ENCODE measurements at regions of chr7 and their contacts with region 1.

Region 1: GRCh38 chr7:108525985-108526767 is at the start of gene PNPLA8:
- DNase-seq: peak; percentile 100
- ATAC-seq: peak; percentile 94
- H3K4me3 ChIP-seq: peak within 1 kb of the TSS; percentile 94
- H3K4me3 Mint-ChIP-seq: peak within 1 kb of the TSS; percentile 84 to 98 (median 97)
- H3K27ac ChIP-seq: peak within 1 kb of the TSS; percentile 89
- H3K27ac Mint-ChIP-seq: peak within 1 kb of the TSS; percentile 97 to 100 (median 99)
- H3K4me1 ChIP-seq: peaks cover 18% of the 10 kb centered on the region in 2 donors
- H3K4me1 Mint-ChIP-seq: peaks cover 18 to 46% (median 33%) of the 10 kb centered on the region in 7 donors
- H3K27me3 ChIP-seq: no peaks in the 10 kb centered on the region
- H3K27me3 Mint-ChIP-seq: peaks cover 0 to 4% (median 0%) of the 10 kb centered on the region in 5 donors
- total RNA-seq, gene PNPLA8: 18.5 to 89.9 (median 29.8) TPM

Region 2: DNA sequence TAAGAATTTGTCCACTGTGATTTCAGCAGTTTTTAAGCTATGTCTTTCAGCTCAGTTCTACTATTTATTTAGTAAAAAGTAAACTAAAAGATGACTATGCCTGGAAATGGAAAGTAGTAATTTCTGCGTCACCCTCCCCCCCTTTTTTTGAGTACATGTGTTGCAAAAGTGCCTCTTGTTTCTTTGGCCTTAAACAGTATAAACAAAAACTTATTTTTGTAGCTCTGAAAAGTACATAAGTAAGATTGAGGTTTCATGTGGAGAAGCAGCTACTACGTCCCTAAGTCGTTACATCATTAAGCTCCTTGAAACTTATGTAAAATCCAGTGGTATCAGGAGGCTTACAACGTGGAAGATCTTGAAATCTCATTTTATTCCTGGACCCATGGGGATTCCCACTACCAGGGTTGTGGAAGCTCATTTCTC is 1403.7 kb before region 1 on chr7:
- CTCF ChIA-PET with region 1: no interaction called
- POLR2A ChIA-PET with region 1: no interaction called
- intact Hi-C with region 1: loop called in 1 of 2 experiments (anchors 5 kb)
- DNase-seq: no peak
- ATAC-seq: no peak
- H3K4me3 ChIP-seq: no peak overlapping the region
- H3K4me3 Mint-ChIP-seq: no peak overlapping the region
- H3K27ac ChIP-seq: no peak overlapping the region
- H3K27ac Mint-ChIP-seq: no peak overlapping the region
- H3K4me1 ChIP-seq: peaks cover 4 to 16% of the 10 kb centered on the region in 2 donors
- H3K4me1 Mint-ChIP-seq: peaks cover 12 to 25% (median 20%) of the 10 kb centered on the region in 7 donors
- H3K27me3 ChIP-seq: no peaks in the 10 kb centered on the region
- H3K27me3 Mint-ChIP-seq: peaks cover 0 to 12% (median 0%) of the 10 kb centered on the region in 5 donors

Region 3: DNA sequence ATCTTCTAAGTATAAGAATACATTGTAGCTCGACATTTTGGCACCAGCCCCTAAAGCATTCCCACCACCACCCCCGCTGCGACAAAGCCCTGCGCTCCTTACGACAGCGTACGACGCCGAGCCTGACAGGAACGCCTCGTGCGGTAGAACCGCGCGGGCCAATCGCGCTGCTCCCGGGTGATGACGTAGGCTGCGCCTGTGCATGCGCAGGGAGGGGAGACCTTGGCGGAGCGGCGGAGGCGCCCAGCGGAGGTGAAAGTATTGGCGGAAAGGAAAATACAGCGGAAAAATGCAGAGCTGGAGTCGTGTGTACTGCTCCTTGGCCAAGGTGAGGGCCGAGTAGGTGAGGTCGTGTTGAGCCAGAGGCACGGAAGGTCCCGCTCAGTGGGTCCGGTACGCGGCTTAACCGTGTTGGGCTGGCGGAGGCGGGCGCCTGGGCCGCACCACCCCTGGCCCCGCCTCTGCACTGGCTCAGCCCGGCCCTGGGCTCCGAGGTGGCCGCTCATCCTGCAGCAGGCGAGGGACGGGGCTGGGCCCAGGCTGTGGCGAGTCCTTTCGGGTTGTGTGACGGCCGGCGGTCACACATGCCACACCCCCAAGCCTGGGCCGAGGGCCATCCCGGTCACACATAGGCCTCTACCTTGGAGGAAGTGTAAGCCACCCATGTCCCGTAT is 635.1 kb before region 1 on chr7 and contains the start of gene DLD:
- CTCF ChIA-PET with region 1: no interaction called
- POLR2A ChIA-PET with region 1: no interaction called
- intact Hi-C with region 1: loop called (anchors 1 to 10 kb)
- DNase-seq: peak; percentile 89 to 94 (median 93)
- ATAC-seq: peak; percentile 98
- H3K4me3 ChIP-seq: peak within 1 kb of the TSS; percentile 93
- H3K4me3 Mint-ChIP-seq: peak within 1 kb of the TSS; percentile 89 to 100 (median 97)
- H3K27ac ChIP-seq: peak within 1 kb of the TSS; percentile 97
- H3K27ac Mint-ChIP-seq: peak within 1 kb of the TSS; percentile 94 to 100 (median 98)
- H3K4me1 ChIP-seq: peaks cover 5 to 35% of the 10 kb centered on the region in 2 donors
- H3K4me1 Mint-ChIP-seq: peaks cover 20 to 55% (median 52%) of the 10 kb centered on the region in 7 donors
- H3K27me3 ChIP-seq: no peaks in the 10 kb centered on the region
- H3K27me3 Mint-ChIP-seq: peaks cover 0 to 3% (median 0%) of the 10 kb centered on the region in 5 donors
- total RNA-seq, gene DLD: 44.5 to 69.3 (median 53.7) TPM

Region 4: DNA sequence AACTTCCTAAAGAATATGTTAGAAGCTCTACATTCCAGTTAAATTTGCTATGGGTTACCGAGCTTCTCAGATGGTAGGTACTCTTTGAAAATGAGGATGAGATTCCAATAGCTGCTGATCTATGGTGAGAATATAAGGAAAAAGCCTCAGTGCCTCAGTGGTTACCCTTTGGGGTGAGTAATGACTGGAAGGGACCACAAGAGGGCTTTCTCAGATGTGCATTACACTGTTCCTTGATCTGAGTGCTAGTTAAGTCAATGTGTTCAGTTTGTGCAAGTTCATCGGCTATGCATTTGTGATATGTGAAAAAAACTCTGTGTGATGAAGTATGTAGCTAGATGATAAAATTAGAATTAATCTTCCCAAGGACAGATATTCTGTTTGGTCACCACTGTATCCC is 73.5 kb before region 1 on chr7:
- CTCF ChIA-PET with region 1: interaction called, 4 read pairs
- POLR2A ChIA-PET with region 1: interaction called, 6 read pairs
- intact Hi-C with region 1: loop called in 1 of 2 experiments (anchors 1 kb)
- DNase-seq: peak in 6 of 9 donors; percentile 24 to 58 (median 41)
- ATAC-seq: peak; percentile 69
- H3K4me3 ChIP-seq: no peak overlapping the region
- H3K4me3 Mint-ChIP-seq: peak overlapping the region in 5 of 10 donors; percentile 7 to 64 (median 47)
- H3K27ac ChIP-seq: no peak overlapping the region
- H3K27ac Mint-ChIP-seq: no peak overlapping the region
- H3K4me1 ChIP-seq: no peaks in the 10 kb centered on the region
- H3K4me1 Mint-ChIP-seq: peaks cover 5 to 30% (median 22%) of the 10 kb centered on the region in 7 donors
- H3K27me3 ChIP-seq: no peaks in the 10 kb centered on the region
- H3K27me3 Mint-ChIP-seq: peaks cover 17 to 69% (median 50%) of the 10 kb centered on the region in 5 donors

Region 5: GRCh38 chr7:108497082-108497725 is 29.0 kb before region 1 on chr7:
- CTCF ChIA-PET with region 1: interaction called, 14 read pairs
- POLR2A ChIA-PET with region 1: interaction called, 3 read pairs
- intact Hi-C with region 1: no loop called
- DNase-seq: peak in 8 of 9 donors; percentile 21 to 59 (median 55)
- ATAC-seq: peak; percentile 88
- H3K4me3 ChIP-seq: no peak overlapping the region
- H3K4me3 Mint-ChIP-seq: no peak overlapping the region
- H3K27ac ChIP-seq: no peak overlapping the region
- H3K27ac Mint-ChIP-seq: peak overlapping the region in 2 of 9 donors; percentile 6 to 43
- H3K4me1 ChIP-seq: no peaks in the 10 kb centered on the region
- H3K4me1 Mint-ChIP-seq: peaks cover 0 to 5% (median 0%) of the 10 kb centered on the region in 7 donors
- H3K27me3 ChIP-seq: no peaks in the 10 kb centered on the region
- H3K27me3 Mint-ChIP-seq: no peaks in the 10 kb centered on the region

Region 6: DNA sequence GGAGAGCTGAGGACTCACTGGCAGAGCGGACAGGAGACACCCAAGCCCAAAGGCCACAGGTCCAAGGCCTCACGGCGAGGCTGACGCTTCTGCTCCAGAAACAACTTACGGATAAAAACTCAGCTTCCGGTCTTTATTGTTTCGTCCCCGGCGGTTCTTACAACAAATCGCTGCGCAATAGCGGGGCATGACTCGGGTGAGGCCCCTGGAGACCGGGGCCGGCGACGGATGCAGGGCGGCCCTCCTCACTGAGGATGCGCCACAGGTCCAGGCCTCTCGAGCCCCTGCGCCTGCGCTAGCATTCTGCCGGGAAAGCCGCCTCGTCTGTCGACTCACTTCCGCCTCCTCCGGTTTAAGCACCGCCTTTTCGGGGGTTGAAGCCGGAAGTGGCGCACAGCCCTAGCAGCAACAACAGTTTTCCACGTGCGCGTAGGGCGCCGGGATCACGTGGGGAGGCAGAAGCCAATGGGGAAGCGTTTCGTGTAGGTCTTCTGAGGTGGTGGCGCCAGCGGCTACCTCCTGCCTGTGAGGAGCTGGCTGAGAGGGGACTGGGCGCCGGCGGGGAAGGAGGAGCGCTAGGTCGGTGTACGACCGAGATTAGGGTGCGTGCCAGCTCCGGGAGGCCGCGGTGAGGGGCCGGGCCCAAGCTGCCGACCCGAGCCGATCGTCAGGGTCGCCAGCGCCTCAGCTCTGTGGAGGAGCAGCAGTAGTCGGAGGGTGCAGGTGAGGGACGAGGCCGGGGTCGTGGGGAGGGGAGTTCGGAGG is 43.4 kb after region 1 on chr7 and contains the starts of genes DNAJB9 and THAP5:
- CTCF ChIA-PET with region 1: interaction called, 3 read pairs
- POLR2A ChIA-PET with region 1: interaction called, 95 read pairs
- intact Hi-C with region 1: loop called (anchors 1 kb)
- DNase-seq: peak; percentile 94 to 100 (median 100)
- ATAC-seq: peak; percentile 94
- H3K4me3 ChIP-seq: peak within 1 kb of the TSS; percentile 86
- H3K4me3 Mint-ChIP-seq: peak within 1 kb of the TSS; percentile 93 to 99 (median 98)
- H3K27ac ChIP-seq: peak within 1 kb of the TSS; percentile 98
- H3K27ac Mint-ChIP-seq: peak within 1 kb of the TSS; percentile 98 to 100 (median 100)
- H3K4me1 ChIP-seq: peaks cover 21 to 34% of the 10 kb centered on the region in 2 donors
- H3K4me1 Mint-ChIP-seq: peaks cover 18 to 81% (median 68%) of the 10 kb centered on the region in 7 donors
- H3K27me3 ChIP-seq: no peaks in the 10 kb centered on the region
- H3K27me3 Mint-ChIP-seq: peaks cover 0 to 3% (median 0%) of the 10 kb centered on the region in 5 donors
- total RNA-seq, gene DNAJB9: 22.7 to 50.0 (median 29.3) TPM
- total RNA-seq, gene THAP5: 21.0 to 54.7 (median 30.8) TPM

Measured in naive thymus-derived CD4-positive, alpha-beta T cell (primary cell).